ENCODE measurements at regions of chr5 and their contacts with region 1.

Region 1: DNA sequence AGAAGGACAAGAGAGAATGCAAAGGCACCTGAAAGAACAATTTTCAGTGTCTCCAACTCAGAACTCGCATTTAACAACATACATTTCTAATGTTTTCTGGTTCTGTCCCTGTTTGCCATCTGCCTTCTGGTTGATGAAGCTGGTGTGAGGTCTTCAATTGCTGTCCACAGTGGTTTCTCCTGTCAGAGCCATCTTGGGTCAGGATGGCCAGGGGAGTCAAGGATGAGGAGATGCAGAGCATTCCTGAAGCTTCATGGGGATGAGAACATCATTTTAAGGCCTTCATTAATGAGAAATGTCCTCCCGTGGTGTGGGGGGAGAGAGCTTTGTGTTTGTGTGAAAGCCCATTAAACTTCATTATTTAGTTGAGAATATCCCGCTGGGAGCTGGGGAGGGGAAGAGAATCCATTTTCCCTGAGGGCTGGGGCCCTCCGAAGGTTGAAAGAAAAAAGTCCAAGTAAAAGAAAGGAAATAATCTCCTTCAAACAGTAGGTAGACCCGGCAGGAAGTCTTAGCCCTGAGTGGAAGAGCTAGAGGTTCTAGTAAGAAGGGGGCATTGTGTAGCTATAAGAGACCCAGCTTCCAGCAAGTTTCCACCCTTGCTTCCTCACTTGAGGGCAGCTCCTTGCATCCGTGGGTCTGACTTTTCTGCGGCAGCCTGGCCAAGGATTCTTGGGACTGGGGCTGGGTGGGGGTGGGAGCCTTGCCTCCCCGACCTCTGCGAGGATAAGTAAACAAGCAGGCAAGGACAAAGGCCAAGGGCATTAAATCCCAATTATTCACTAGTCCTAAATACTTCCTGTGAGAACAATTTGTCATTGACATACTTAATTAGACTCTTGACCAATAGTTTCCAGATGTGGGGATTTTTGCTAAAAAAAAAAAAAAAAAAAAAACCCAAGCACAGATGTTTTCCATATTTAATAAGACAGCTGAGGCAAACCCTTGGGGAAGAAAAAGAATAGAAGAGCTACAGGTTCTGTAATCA is 119.2 kb downstream of the MSX2 start:
- DNase-seq: no peak
- ATAC-seq: no peak
- H3K4me3 ChIP-seq: no peak overlapping the region
- H3K27ac ChIP-seq: no peak overlapping the region
- H3K4me1 ChIP-seq: no peaks in the 10 kb centered on the region
- H3K27me3 ChIP-seq: no peaks in the 10 kb centered on the region; the same call in 1 of the 2 replicates
- CTCF ChIP-seq: no peak
- POLR2A ChIP-seq: no peak
- RAD21 ChIP-seq: no peak

Region 2: DNA sequence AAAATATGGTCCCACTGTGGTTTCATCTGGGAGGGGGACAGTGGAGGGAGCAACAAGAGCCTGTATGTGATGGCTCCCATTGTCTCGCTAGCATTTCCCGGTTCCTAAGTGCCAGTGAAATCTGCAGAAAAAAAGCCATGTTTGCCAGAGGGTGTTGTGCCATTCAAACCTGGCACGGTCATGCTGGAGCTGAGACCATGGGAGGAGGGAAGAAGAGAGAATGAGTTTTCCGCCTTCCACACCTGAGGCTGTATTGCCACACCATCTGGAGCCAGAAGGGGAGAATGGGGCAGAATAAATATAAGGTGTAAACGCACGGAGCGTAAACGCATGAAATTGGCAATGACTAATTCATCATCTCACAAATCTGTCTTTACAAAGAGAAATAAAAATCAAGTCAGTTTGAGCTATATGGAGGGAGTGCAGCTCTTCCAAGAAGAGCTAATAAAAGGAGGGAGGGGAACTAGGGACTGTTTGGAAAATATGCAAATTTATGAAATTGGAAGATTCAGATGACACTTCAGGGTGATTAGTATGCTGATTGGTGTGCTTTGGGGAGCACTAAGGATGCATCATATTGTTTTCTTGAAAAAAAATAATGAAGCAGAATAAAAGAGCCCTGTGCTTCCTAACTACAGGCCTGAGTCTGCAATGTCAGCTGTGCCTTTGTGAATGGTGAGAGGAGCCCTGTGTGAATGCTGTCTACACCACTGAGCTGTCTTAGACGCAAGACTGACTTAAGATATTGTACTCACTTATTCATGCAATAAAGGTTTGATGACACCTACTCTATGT is 560.1 kb before region 1 on chr5:
- CTCF ChIA-PET with region 1: no interaction called
- POLR2A ChIA-PET with region 1: no interaction called
- dilution Hi-C with region 1: no loop called
- in situ Hi-C with region 1: no loop called
- intact Hi-C with region 1: no loop called
- DNase-seq: no peak
- ATAC-seq: no peak
- H3K4me3 ChIP-seq: no peak overlapping the region
- H3K27ac ChIP-seq: no peak overlapping the region
- H3K4me1 ChIP-seq: no peaks in the 10 kb centered on the region
- H3K27me3 ChIP-seq: no peaks in the 10 kb centered on the region
- CTCF ChIP-seq: no peak
- POLR2A ChIP-seq: no peak
- RAD21 ChIP-seq: no peak

Region 3: GRCh38 chr5:174621090-174621489 is 222.5 kb before region 1 on chr5:
- CTCF ChIA-PET with region 1: no interaction called
- POLR2A ChIA-PET with region 1: interaction called, 12 read pairs
- dilution Hi-C with region 1: no loop called
- in situ Hi-C with region 1: no loop called
- intact Hi-C with region 1: no loop called
- DNase-seq: no peak
- ATAC-seq: no peak
- H3K4me3 ChIP-seq: no peak overlapping the region
- H3K27ac ChIP-seq: no peak overlapping the region
- H3K4me1 ChIP-seq: peaks cover 4% of the 10 kb centered on the region; the same call in 1 of the 2 replicates
- H3K27me3 ChIP-seq: peaks cover 5% of the 10 kb centered on the region; the same call in 1 of the 2 replicates
- CTCF ChIP-seq: no peak
- POLR2A ChIP-seq: no peak
- RAD21 ChIP-seq: no peak

Region 4: DNA sequence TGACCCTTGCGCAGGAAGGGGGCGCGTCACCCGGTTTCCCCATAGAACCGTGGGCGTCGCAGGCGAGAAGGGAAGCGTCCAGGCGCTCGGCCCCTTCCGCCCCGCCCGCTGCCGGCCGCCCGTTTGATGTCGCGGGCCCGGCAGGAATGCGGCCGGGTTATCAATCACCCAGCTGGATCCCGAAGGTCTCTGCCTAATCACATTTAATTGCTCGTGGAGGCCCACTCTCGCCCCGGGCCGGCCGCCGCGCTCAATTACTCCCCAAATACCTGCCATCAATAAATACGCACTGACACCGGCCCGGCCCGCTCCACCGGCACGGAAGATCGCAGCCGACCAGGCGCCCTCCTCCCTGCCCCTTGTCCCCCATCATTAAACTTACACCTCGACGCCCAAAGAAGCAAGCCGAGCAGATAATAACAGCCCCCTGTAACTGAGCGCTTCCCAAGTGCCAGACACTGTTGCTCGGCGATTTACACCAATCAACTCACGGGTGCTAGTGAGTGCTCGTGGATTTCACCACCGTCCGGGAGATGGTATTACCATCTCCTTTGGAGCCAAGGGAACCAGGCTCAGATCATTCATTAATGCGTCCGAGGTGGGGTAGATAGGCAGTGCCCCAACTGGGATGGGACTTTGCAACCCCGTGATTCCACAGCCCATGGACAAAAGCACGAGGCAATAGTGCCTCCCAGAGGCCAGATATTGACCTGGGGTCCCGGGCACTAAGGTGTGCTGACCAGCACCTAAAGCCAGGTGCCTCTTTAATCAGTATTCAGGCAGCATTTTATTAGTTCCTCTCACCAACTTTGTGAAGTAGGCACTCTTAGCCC is 107.8 kb before region 1 on chr5:
- CTCF ChIA-PET with region 1: no interaction called
- POLR2A ChIA-PET with region 1: no interaction called
- dilution Hi-C with region 1: no loop called
- in situ Hi-C with region 1: no loop called
- intact Hi-C with region 1: no loop called
- DNase-seq: no peak
- ATAC-seq: peak; percentile 51
- H3K4me3 ChIP-seq: peak overlapping the region; percentile 2; the same call in 1 of the 2 replicates
- H3K27ac ChIP-seq: peak overlapping the region; percentile 36
- H3K4me1 ChIP-seq: peaks cover 6% of the 10 kb centered on the region
- H3K27me3 ChIP-seq: peaks cover 27% of the 10 kb centered on the region
- CTCF ChIP-seq: peak; percentile 39
- POLR2A ChIP-seq: no peak
- RAD21 ChIP-seq: peak; percentile 61